Activated B cell treated with CpG ODN at 0.5 μM for 24 hours (primary cell): ENCODE measurements at regions of chr14 and their contacts with region 1.

Region 1: DNA sequence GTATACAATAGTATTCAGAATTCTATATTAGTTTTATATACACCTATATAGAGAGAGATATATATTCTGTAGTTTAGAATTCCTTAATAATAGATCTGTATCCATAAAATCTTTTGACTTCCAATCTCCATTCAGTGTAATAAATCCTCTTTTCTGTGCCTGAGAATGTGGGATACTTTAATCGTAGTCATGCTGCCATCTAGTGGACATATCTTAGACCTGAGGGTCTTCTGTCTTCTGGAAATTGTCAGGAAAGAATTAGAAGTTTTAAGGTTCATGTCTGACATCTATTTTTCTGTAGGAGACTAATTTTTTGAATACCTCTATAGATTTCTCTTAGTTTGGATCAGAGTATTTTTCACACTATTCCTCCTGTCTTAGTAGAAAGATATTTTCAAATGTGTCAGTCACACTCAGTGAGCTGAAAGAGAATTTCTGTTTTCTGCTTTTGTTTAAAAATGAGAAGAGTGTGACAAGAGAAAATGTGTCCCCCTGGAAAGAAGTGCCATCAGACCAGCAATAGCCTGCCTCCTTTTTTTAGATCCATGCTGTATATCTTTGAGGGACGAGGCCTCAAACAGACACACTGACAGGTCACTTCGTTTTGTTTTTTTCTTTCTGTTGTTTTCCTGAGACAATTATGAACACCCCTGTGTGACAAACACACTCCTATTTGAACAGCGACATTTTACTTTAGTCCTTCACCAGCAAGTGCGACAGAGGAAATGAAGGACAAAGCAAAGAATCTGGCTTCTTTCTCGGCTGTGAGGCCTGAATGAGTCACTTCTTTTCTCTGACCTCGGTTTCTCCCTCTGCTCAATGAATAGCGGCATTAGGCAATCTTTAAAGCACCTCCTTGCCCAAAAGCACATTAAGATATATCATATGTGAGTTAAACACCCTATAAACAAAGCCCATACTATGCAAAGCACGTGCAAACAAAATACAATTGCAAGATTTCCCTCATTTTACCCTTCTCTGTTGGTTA is 96.3 kb downstream of the GALC start:
- DNase-seq: no peak
- ATAC-seq: no peak
- H3K4me3 Mint-ChIP-seq: no peak overlapping the region
- H3K27ac Mint-ChIP-seq: no peak overlapping the region
- H3K4me1 Mint-ChIP-seq: no peaks in the 10 kb centered on the region
- H3K27me3 Mint-ChIP-seq: peaks cover 8% of the 10 kb centered on the region
- CTCF ChIP-seq: no peak

Region 2: DNA sequence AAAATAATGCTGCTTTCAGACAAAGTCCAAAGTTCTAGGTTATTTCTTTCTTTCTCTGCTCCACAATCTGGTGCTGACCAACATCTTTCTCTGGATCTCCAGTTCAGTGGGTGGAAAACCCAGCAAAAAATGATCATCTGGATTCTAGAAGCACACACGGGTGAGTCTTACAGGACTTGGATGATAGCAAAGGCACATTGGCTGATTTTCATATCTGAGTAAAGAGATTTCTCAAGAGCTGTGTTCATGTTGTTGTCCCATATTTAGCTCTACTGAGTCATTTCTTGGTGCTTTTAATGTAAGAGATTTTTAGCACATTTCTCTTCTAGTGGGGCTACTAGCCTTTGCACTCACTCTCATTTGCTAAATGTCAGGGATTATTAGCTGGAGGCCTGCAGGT is 240.4 kb before region 1 on chr14:
- CTCF ChIA-PET with region 1: no interaction called
- POLR2A ChIA-PET with region 1: no interaction called
- intact Hi-C with region 1: no loop called
- DNase-seq: no peak
- ATAC-seq: no peak
- H3K4me3 Mint-ChIP-seq: no peak overlapping the region
- H3K27ac Mint-ChIP-seq: no peak overlapping the region
- H3K4me1 Mint-ChIP-seq: no peaks in the 10 kb centered on the region
- H3K27me3 Mint-ChIP-seq: no peaks in the 10 kb centered on the region
- CTCF ChIP-seq: no peak

Region 3: GRCh38 chr14:87725318-87725717 is 171.4 kb before region 1 on chr14:
- CTCF ChIA-PET with region 1: no interaction called
- POLR2A ChIA-PET with region 1: no interaction called
- intact Hi-C with region 1: no loop called
- DNase-seq: no peak
- ATAC-seq: no peak
- H3K4me3 Mint-ChIP-seq: no peak overlapping the region
- H3K27ac Mint-ChIP-seq: no peak overlapping the region
- H3K4me1 Mint-ChIP-seq: no peaks in the 10 kb centered on the region
- H3K27me3 Mint-ChIP-seq: no peaks in the 10 kb centered on the region
- CTCF ChIP-seq: no peak

Region 4: DNA sequence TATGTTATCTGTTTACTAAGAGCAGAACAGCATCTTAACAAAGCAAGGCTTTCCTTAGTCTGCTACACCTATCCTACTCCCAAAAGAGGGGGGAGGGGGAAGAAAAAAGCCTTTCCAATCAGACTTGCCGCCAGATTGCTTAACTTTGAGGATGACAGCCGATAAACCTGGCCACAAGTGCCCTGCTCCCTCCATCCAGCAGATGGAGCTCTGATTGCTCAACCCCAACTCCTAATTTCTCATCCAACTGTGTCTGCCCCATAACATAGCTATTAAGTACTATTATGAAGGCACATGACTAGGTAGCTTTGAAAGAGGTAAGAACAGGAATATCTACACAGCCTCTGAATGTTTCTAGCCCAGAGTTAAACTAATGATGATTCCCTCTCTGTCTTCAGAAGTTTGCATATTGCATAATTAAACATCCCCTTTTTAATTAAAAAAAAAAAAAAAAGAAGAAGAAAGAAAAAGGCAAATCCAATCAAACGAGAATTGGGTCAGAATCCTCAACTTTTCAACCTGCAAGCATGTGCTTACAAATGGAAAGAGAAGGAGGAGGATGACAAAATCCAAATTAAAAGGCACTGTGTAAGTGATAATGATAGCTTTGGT is 151.1 kb before region 1 on chr14:
- CTCF ChIA-PET with region 1: interaction called, 3 read pairs
- POLR2A ChIA-PET with region 1: no interaction called
- intact Hi-C with region 1: loop called (anchors 1 kb)
- DNase-seq: no peak
- ATAC-seq: no peak
- H3K4me3 Mint-ChIP-seq: no peak overlapping the region
- H3K27ac Mint-ChIP-seq: no peak overlapping the region
- H3K4me1 Mint-ChIP-seq: no peaks in the 10 kb centered on the region
- H3K27me3 Mint-ChIP-seq: no peaks in the 10 kb centered on the region
- CTCF ChIP-seq: no peak